GM12878 (cell line): ENCODE measurements at regions of chr15 and their contacts with region 1.

Region 1: GRCh38 chr15:78108299-78109084 is 16.1 kb downstream of the SH2D7 start:
- DNase-seq: peak; percentile 43
- ATAC-seq: peak; percentile 84
- H3K4me3 ChIP-seq: no peak overlapping the region
- H3K27ac ChIP-seq: no peak overlapping the region
- H3K4me1 ChIP-seq: peaks cover 22% of the 10 kb centered on the region
- H3K27me3 ChIP-seq: no peaks in the 10 kb centered on the region
- CTCF ChIP-seq: peak; percentile 89 to 97 (median 94)
- EP300 ChIP-seq: no peak
- POLR2A ChIP-seq: no peak
- RAD21 ChIP-seq: peak; percentile 77

Region 2: GRCh38 chr15:77966540-77967290 is 141.8 kb before region 1 on chr15:
- CTCF ChIA-PET with region 1: interaction called, 327 read pairs
- POLR2A ChIA-PET with region 1: interaction called, 3 read pairs
- RAD21 ChIA-PET with region 1: interaction called, 157 read pairs
- SMC1A ChIA-PET with region 1: interaction called, 184 read pairs
- in situ Hi-C with region 1: loop called (anchors 5 kb)
- intact Hi-C with region 1: loop called (anchors 1 kb)
- DNase-seq: no peak
- ATAC-seq: peak; percentile 96
- H3K4me3 ChIP-seq: no peak overlapping the region
- H3K27ac ChIP-seq: no peak overlapping the region
- H3K4me1 ChIP-seq: peaks cover 6% of the 10 kb centered on the region; the same call in 1 of the 2 replicates
- H3K27me3 ChIP-seq: no peaks in the 10 kb centered on the region
- CTCF ChIP-seq: peak; percentile 83 to 85 (median 84)
- EP300 ChIP-seq: no peak
- POLR2A ChIP-seq: no peak
- RAD21 ChIP-seq: peak; percentile 86

Region 3: GRCh38 chr15:78034495-78035191 is 73.8 kb before region 1 on chr15:
- CTCF ChIA-PET with region 1: interaction called, 25 read pairs
- POLR2A ChIA-PET with region 1: no interaction called
- RAD21 ChIA-PET with region 1: interaction called, 19 read pairs
- SMC1A ChIA-PET with region 1: interaction called, 22 read pairs
- in situ Hi-C with region 1: no loop called
- intact Hi-C with region 1: no loop called
- DNase-seq: peak; percentile 66
- ATAC-seq: peak; percentile 92
- H3K4me3 ChIP-seq: no peak overlapping the region; the same call in 1 of the 2 replicates
- H3K27ac ChIP-seq: peak overlapping the region; percentile 4
- H3K4me1 ChIP-seq: peaks cover 40% of the 10 kb centered on the region
- H3K27me3 ChIP-seq: no peaks in the 10 kb centered on the region
- CTCF ChIP-seq: peak in 1 of 3 experiments; percentile 14; a peak in 1 of 6 replicates
- EP300 ChIP-seq: 0 out of 4 replicates have a peak, but pooled peaks of 1 of the 2 experiments have one; percentile 26
- POLR2A ChIP-seq: no peak
- RAD21 ChIP-seq: peak; percentile 24; the same call in 1 of the 2 replicates

Region 4: GRCh38 chr15:78077058-78077877 is 31.2 kb before region 1 on chr15 and contains the start of gene TBC1D2B:
- CTCF ChIA-PET with region 1: interaction called, 191 read pairs
- POLR2A ChIA-PET with region 1: interaction called, 6 read pairs
- RAD21 ChIA-PET with region 1: interaction called, 18 read pairs
- SMC1A ChIA-PET with region 1: interaction called, 131 read pairs
- in situ Hi-C with region 1: no loop called
- intact Hi-C with region 1: no loop called
- DNase-seq: no peak
- ATAC-seq: peak; percentile 81
- H3K4me3 ChIP-seq: peak within 1 kb of the TSS; percentile 99
- H3K27ac ChIP-seq: peak within 1 kb of the TSS; percentile 62
- H3K4me1 ChIP-seq: peaks cover 10% of the 10 kb centered on the region
- H3K27me3 ChIP-seq: no peaks in the 10 kb centered on the region
- CTCF ChIP-seq: no peak; a peak in 1 of 6 replicates
- EP300 ChIP-seq: no peak
- POLR2A ChIP-seq: no peak
- RAD21 ChIP-seq: no peak
- polyA plus RNA-seq, gene TBC1D2B: 1.3 to 1.4 TPM

Region 5: DNA sequence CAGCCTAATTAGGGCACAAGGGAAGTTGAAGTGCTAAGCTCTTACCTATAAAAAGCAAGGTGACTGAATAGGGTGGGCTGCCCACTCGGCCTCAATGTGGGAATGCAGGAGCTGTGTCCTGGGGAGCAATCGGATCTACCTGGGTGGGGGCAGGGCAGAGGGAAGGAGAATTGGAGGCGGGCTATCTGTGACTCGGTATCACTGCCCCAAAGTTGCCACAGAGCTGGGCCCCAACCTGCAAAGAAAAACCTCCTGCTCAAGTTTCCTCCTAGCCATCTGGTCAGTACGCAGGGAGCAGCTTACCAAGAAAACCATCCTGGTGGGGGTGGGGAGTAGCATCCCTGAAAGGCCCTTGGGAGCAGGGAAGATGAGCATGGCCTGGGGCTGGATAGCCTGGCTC is 12.0 kb after region 1 on chr15:
- CTCF ChIA-PET with region 1: interaction called, 12 read pairs
- POLR2A ChIA-PET with region 1: no interaction called
- RAD21 ChIA-PET with region 1: interaction called, 6 read pairs
- SMC1A ChIA-PET with region 1: interaction called, 3 read pairs
- in situ Hi-C with region 1: no loop called
- intact Hi-C with region 1: no loop called
- DNase-seq: no peak
- ATAC-seq: no peak
- H3K4me3 ChIP-seq: no peak overlapping the region
- H3K27ac ChIP-seq: no peak overlapping the region
- H3K4me1 ChIP-seq: no peaks in the 10 kb centered on the region
- H3K27me3 ChIP-seq: no peaks in the 10 kb centered on the region
- CTCF ChIP-seq: no peak
- EP300 ChIP-seq: no peak
- POLR2A ChIP-seq: no peak
- RAD21 ChIP-seq: no peak

Region 6: DNA sequence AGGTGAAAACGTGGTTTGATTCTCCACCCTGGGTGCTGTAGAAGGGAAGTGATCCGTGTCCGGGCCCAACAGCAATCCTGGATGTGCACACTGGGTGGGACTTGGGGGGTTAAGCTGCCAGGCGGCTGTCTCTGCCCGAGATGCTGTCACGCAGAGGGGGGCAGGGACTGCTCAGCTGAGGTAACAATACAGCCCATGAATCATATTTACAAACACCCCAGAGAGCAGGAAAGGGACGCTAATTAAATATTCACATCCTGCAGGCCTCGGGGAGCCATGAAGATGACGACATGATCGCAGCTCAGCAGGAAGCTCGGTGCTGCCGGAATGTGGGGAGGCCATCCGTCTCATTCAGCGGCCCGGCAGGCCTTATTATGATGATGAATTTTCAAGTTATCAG is 213.8 kb after region 1 on chr15:
- CTCF ChIA-PET with region 1: no interaction called
- POLR2A ChIA-PET with region 1: no interaction called
- RAD21 ChIA-PET with region 1: no interaction called
- SMC1A ChIA-PET with region 1: no interaction called
- in situ Hi-C with region 1: no loop called
- intact Hi-C with region 1: no loop called
- DNase-seq: no peak
- ATAC-seq: no peak
- H3K4me3 ChIP-seq: no peak overlapping the region
- H3K27ac ChIP-seq: no peak overlapping the region
- H3K4me1 ChIP-seq: no peaks in the 10 kb centered on the region
- H3K27me3 ChIP-seq: 0 out of 4 replicates have a peak, but pooled peaks cover 0 to 1% of the 10 kb centered on the region in 2 experiments
- CTCF ChIP-seq: no peak
- EP300 ChIP-seq: no peak
- POLR2A ChIP-seq: no peak
- RAD21 ChIP-seq: no peak

Region 7: GRCh38 chr15:78422571-78423340 is 314.3 kb after region 1 on chr15:
- CTCF ChIA-PET with region 1: interaction called, 10 read pairs
- POLR2A ChIA-PET with region 1: no interaction called
- RAD21 ChIA-PET with region 1: interaction called, 3 read pairs
- SMC1A ChIA-PET with region 1: no interaction called
- in situ Hi-C with region 1: loop called (anchors 5 kb)
- intact Hi-C with region 1: loop called (anchors 5 kb)
- DNase-seq: no peak
- ATAC-seq: peak; percentile 90
- H3K4me3 ChIP-seq: no peak overlapping the region
- H3K27ac ChIP-seq: no peak overlapping the region
- H3K4me1 ChIP-seq: no peaks in the 10 kb centered on the region
- H3K27me3 ChIP-seq: no peaks in the 10 kb centered on the region
- CTCF ChIP-seq: peak; percentile 90 to 94 (median 94)
- EP300 ChIP-seq: no peak
- POLR2A ChIP-seq: no peak
- RAD21 ChIP-seq: peak; percentile 69